HepG2 (cell line): ENCODE measurements at regions of chr16 and their contacts with region 1.

Region 1: DNA sequence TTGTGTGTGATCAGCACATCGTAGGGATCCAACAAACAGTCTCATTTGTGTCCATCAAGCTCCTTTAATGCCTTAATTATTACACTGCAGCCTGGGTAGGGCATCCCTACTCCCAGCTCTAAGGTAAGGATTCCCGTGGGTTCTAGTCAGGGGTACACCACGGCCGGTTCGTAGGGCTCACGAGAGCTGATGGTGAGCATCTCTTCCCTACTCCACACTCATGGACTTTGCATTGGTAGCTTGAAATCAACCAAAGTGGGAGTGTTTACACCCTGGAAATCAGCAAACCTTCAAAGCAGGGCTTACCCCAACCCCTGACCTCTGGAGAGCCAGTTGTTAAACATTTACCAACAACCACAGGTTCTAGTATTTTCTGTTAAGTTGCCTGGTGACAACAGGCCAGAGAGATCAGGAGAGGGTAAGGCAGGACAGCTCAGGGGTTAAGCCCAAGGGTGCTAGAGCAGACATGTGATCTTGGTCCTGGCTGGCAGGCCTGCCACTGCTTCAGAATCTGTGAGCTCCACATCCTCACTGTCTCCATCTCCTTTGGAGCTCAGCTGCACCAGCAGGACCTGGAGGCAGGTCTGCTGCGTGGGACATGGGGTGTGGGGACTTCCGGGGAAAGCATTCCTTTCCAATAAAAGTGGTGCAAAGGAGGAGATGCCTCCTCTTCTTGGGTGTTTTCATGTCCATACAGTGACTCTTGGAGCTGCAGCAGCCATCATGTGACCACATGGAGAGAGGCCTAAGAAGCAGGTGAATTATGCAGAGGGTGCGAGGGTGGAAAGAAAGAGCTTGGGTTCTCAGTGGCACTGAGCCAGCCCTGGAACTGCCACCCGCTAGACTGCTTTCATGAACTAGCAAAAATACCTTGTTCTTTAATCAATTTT is 36.1 kb upstream of the ZCCHC14 start:
- DNase-seq: peak; percentile 97
- ATAC-seq: peak; percentile 94
- H3K4me3 ChIP-seq: peak overlapping the region; percentile 15 to 63 (median 31); a peak in 5 of 6 replicates
- H3K27ac ChIP-seq: peak overlapping the region; percentile 94
- H3K4me1 ChIP-seq: peaks cover 86% of the 10 kb centered on the region
- H3K27me3 ChIP-seq: no peaks in the 10 kb centered on the region
- CTCF ChIP-seq: no peak
- EP300 ChIP-seq: peak; percentile 70 to 96; a peak in 3 of 4 replicates
- POLR2A ChIP-seq: peak; percentile 70 to 82
- RAD21 ChIP-seq: no peak

Region 2: GRCh38 chr16:86732621-86733295 is 796.2 kb before region 1 on chr16:
- CTCF ChIA-PET with region 1: no interaction called
- POLR2A ChIA-PET with region 1: no interaction called
- in situ Hi-C with region 1: no loop called
- intact Hi-C with region 1: no loop called
- DNase-seq: no peak
- ATAC-seq: no peak
- H3K4me3 ChIP-seq: no peak overlapping the region
- H3K27ac ChIP-seq: no peak overlapping the region
- H3K4me1 ChIP-seq: no peaks in the 10 kb centered on the region
- H3K27me3 ChIP-seq: peaks cover 11 to 95% of the 10 kb centered on the region in 2 experiments
- CTCF ChIP-seq: no peak
- EP300 ChIP-seq: no peak
- POLR2A ChIP-seq: no peak
- RAD21 ChIP-seq: no peak

Region 3: DNA sequence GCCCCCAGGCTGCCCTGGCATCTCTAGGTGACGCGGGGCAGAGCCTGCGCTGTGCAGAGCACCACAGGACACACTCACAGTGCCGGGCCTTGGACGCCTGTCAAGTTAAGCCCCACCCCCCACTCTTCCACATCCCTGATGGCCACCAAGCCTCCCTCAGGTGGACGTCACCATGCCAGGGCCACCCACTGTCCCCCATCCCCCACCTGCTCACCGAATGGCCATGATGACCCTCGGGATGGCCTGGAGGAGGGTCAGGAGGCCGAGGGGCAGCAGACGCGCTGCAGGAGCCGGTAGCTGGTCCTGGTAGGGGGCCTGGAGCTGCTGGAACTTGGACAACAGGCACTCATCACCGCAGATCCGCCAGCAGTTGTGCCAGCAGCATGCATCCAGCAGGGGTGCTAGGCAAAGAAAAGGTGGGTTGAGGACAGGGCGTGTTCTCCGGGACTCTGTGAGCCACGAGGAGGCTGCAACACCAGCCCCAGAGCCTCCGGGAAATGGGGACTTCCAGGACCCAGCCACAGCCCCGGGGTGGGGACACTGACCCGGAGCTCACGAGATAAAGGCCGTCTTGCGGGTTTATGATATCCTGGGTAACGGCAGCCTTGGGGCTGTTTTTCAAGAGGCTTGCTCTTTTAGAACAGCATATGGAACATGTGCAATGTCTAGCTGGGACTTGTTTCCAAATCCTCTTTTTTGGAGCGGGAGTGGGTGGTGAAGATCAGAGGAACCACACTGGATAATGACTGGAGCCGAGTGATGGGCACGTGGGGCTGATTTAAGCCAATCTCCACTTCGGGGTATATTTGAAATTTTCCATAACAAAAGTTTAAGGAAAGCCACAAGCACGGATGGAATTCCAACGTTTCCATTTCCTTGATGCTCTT is 223.2 kb before region 1 on chr16:
- CTCF ChIA-PET with region 1: no interaction called
- POLR2A ChIA-PET with region 1: no interaction called
- in situ Hi-C with region 1: no loop called
- intact Hi-C with region 1: no loop called
- DNase-seq: no peak
- ATAC-seq: peak; percentile 68
- H3K4me3 ChIP-seq: no peak overlapping the region
- H3K27ac ChIP-seq: no peak overlapping the region
- H3K4me1 ChIP-seq: peaks cover 8% of the 10 kb centered on the region
- H3K27me3 ChIP-seq: no peaks in the 10 kb centered on the region
- CTCF ChIP-seq: no peak
- EP300 ChIP-seq: no peak
- POLR2A ChIP-seq: no peak
- RAD21 ChIP-seq: no peak

Region 4: DNA sequence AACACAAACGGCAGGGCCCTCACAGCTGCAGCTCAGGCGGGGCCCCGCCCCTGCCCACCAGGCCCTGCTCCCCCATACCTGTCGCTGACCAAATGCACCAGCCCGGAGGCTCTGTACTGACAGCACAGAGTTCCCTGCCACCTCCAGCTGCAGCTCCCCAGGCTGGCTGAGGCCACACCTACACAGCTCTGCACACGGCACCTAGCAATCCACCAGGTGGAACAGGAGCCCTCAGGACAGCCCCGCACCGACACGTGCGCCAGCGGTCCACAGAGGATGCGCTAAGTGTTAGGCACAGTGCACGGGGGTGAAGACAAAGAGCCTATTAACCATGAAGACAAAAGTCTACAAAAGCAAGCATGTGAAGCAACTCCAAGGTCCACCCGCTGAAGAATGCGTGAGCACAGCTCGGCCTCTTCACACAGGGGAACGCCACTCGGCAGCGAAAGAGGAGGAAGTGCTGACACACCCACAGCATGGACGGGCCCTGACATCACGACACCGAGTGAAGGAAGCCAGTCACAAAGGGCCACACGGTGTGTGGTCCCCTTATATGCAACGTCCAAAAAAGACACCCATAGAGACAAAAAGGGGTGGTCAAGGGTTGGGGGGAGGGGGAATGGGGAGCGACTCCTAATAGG is 41.5 kb before region 1 on chr16:
- CTCF ChIA-PET with region 1: no interaction called
- POLR2A ChIA-PET with region 1: interaction called, 16 read pairs
- in situ Hi-C with region 1: no loop called
- intact Hi-C with region 1: no loop called
- DNase-seq: peak; percentile 97
- ATAC-seq: peak; percentile 87
- H3K4me3 ChIP-seq: peak overlapping the region; percentile 38 to 54 (median 50); a peak in 5 of 6 replicates
- H3K27ac ChIP-seq: peak overlapping the region; percentile 60
- H3K4me1 ChIP-seq: peaks cover 71% of the 10 kb centered on the region
- H3K27me3 ChIP-seq: no peaks in the 10 kb centered on the region
- CTCF ChIP-seq: peak; percentile 51
- EP300 ChIP-seq: peak in 1 of 2 experiments; percentile 18; a peak in 1 of 4 replicates
- POLR2A ChIP-seq: peak in 1 of 2 experiments; percentile 38; a peak in 1 of 4 replicates
- RAD21 ChIP-seq: 0 out of 2 replicates have a peak, but pooled peaks have one; percentile 8

Region 5: GRCh38 chr16:87492721-87493607 is 36.0 kb before region 1 on chr16 and contains the start of gene ZCCHC14:
- CTCF ChIA-PET with region 1: no interaction called
- POLR2A ChIA-PET with region 1: interaction called, 16 read pairs
- in situ Hi-C with region 1: no loop called
- intact Hi-C with region 1: loop called (anchors 1 kb)
- DNase-seq: peak; percentile 97
- ATAC-seq: peak; percentile 75
- H3K4me3 ChIP-seq: peak within 1 kb of the TSS; percentile 67 to 93 (median 85)
- H3K27ac ChIP-seq: peak within 1 kb of the TSS; percentile 63
- H3K4me1 ChIP-seq: peaks cover 70% of the 10 kb centered on the region
- H3K27me3 ChIP-seq: no peaks in the 10 kb centered on the region; a peak in 1 of 5 replicates
- CTCF ChIP-seq: no peak
- EP300 ChIP-seq: peak; percentile 8 to 46; a peak in 2 of 4 replicates
- POLR2A ChIP-seq: peak; percentile 40 to 91; a peak in 3 of 4 replicates
- RAD21 ChIP-seq: peak; percentile 86
- total RNA-seq, gene ZCCHC14: 12.5 and 20.4 TPM in 2 replicates

Region 6: GRCh38 chr16:87498324-87499188 is 30.4 kb before region 1 on chr16:
- CTCF ChIA-PET with region 1: no interaction called
- POLR2A ChIA-PET with region 1: interaction called, 12 read pairs
- in situ Hi-C with region 1: no loop called
- intact Hi-C with region 1: loop called (anchors 1 kb)
- DNase-seq: no peak
- ATAC-seq: peak; percentile 5; the same call in 2 of the 3 replicates
- H3K4me3 ChIP-seq: no peak overlapping the region
- H3K27ac ChIP-seq: peak overlapping the region; percentile 37
- H3K4me1 ChIP-seq: peaks cover 86% of the 10 kb centered on the region
- H3K27me3 ChIP-seq: no peaks in the 10 kb centered on the region; a peak in 1 of 5 replicates
- CTCF ChIP-seq: no peak
- EP300 ChIP-seq: peak in 1 of 2 experiments; percentile 18; a peak in 1 of 4 replicates
- POLR2A ChIP-seq: no peak
- RAD21 ChIP-seq: no peak

Region 7: DNA sequence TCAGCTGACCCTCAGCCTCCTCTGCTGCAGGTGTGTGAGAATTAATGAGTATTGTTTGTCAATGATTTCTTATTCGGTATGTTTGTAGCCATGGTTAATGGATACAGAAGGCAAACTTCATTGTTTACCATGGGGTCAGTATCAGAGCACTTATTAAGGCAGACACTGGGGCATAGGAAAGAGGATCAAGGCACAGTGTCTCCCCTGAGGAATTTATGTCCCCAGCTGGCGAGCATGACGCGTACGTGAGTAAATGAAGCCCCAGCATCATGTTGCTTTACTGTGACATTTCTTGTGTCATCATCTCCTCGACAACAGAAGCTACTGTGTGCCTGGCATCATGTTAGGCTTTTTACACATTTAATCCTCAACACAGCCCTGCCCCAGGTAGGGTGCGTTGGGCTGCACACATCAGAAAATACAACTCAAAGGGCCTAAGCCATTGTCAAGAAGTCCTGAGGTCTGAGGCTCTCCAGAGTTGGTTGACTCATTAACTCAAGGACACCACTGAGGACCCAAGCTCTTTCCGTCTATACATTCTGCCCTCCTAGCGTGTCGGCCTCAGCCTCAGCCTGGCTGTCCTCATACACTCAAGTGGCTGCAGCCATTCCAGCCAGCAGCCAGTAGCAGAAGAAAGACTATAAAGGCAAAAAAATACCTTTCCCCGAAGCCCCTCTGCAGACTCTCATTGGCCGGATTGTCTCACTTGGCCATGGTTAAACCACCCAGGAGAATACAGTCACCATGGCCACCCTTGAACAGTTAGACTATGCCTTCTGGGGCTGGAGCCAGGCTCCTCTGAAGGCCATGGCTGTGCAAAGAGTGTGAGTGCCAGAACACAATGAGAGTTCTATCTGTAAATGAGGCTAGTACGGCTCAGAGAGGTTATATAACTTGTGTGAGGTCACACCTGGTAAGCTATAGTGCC is 22.2 kb before region 1 on chr16:
- CTCF ChIA-PET with region 1: no interaction called
- POLR2A ChIA-PET with region 1: interaction called, 10 read pairs
- in situ Hi-C with region 1: no loop called
- intact Hi-C with region 1: no loop called
- DNase-seq: peak; percentile 78
- ATAC-seq: peak; percentile 89
- H3K4me3 ChIP-seq: peak overlapping the region; percentile 5 to 49 (median 8); a peak in 3 of 6 replicates
- H3K27ac ChIP-seq: peak overlapping the region; percentile 40
- H3K4me1 ChIP-seq: peaks cover 59% of the 10 kb centered on the region
- H3K27me3 ChIP-seq: 0 out of 5 replicates have a peak, but pooled peaks cover 0 to 2% of the 10 kb centered on the region in 2 experiments
- CTCF ChIP-seq: no peak
- EP300 ChIP-seq: no peak
- POLR2A ChIP-seq: no peak
- RAD21 ChIP-seq: peak; percentile 26; the same call in 1 of the 2 replicates

Region 8: GRCh38 chr16:87540945-87541877 is 12.3 kb after region 1 on chr16:
- CTCF ChIA-PET with region 1: no interaction called
- POLR2A ChIA-PET with region 1: interaction called, 11 read pairs
- in situ Hi-C with region 1: no loop called
- intact Hi-C with region 1: no loop called
- DNase-seq: no peak
- ATAC-seq: no peak
- H3K4me3 ChIP-seq: no peak overlapping the region; a peak in 1 of 6 replicates
- H3K27ac ChIP-seq: no peak overlapping the region
- H3K4me1 ChIP-seq: peaks cover 79% of the 10 kb centered on the region
- H3K27me3 ChIP-seq: peaks cover 7 to 59% of the 10 kb centered on the region in 2 experiments
- CTCF ChIP-seq: no peak
- EP300 ChIP-seq: no peak
- POLR2A ChIP-seq: no peak
- RAD21 ChIP-seq: no peak